A673 (cell line): ENCODE measurements at regions of chr16 and their contacts with region 1.

Region 1: DNA sequence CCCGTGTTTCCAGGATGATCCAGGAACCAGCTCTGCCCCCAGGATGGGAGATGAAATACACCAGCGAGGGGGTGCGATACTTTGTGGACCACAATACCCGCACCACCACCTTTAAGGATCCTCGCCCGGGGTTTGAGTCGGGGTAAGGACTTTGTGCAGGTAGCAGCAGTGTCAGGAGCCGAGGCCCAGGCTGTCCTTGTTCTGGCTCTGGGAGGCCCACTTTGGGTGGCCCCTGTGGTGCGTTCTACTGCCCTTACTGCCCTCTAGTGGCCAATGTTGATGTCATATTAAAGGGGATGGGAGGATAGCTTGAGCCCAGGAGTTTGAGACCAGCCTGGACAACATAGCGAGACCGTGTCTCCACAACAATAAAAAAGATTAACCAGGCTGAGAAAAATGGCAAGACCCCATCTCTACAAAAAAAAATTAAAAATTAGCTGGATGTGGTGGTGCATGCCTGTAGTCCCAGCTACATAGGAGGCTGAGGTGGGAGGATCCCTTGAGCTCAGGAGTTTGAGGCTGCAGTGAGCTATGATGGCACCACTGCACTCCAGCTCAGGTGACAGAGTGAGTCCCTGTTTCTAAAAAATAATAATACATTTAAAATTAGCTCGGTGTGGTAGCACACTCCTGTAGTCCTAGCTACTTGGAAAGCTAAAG is 20.9 kb upstream of the CLEC18A start:
- DNase-seq: peak; percentile 78
- H3K4me3 ChIP-seq: no peak overlapping the region
- H3K27ac ChIP-seq: no peak overlapping the region
- H3K4me1 ChIP-seq: no peaks in the 10 kb centered on the region
- H3K27me3 ChIP-seq: no peaks in the 10 kb centered on the region
- CTCF ChIP-seq: peak; percentile 77

Region 2: DNA sequence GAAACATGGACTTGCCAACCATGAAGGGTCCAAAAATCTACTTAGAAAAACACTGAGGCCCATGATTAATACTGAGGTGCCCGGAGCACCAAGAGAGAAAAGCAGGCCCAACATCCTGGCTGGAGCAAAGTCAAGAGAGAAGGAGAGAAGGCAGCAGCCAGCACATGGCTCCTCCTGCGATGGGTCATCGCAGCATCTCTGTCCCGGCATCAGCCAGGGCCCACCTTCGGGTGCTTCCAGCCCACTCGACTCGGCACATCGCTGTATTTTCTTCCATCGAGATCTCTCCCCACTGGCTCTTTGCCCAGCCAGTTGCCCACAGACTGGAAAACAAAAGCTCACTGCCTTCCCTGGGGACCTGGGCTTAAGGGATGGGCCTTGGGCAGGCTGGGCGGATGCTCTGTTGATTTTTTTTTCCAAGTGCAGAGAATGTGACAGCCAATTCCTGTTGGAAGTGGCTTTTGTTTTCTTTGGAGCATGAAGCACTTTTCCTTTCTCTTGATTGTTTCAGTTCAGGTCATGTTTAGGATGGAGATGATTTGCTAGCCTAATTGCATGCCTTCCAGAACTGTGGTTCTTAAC is 447.7 kb before region 1 on chr16:
- CTCF ChIA-PET with region 1: no interaction called
- POLR2A ChIA-PET with region 1: no interaction called
- intact Hi-C with region 1: no loop called
- DNase-seq: peak; percentile 88
- H3K4me3 ChIP-seq: no peak overlapping the region
- H3K27ac ChIP-seq: no peak overlapping the region
- H3K4me1 ChIP-seq: peaks cover 12% of the 10 kb centered on the region
- H3K27me3 ChIP-seq: no peaks in the 10 kb centered on the region
- CTCF ChIP-seq: no peak

Region 3: DNA sequence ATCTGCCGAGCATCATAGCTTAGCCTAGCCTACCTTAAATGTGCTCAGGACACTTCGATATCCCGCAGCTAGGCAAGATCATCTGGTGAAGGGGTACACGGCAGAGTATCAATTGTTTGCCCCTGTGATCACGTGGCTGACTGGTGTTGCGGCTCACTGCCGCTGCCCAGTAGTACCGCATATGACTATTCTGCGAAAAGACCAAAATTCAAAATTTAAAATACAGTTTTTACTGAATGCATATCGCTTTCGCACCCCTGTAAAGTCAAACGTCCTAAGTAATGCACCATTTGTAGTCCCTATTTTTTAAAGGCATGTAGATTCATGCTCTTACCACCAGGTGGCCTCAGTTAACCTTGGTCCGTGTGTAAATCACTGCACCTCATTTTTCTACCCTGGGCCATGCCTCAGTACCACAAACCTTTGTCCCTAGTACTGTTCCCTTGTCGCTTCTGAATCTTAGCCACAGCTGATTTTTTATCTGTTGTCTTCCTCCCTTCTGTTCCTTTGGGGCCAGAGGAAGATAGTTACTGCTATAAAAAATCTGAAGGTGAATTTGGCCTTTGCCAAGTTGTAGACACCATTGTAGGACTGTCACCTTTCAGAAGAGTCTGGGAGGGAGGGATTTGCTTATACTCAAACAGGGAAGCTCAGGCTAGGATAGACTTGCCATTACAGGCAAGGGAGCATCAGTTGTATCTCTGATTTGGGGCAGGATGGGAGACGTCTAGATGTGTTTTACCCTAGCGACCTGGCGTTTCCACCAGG is 133.7 kb before region 1 on chr16:
- CTCF ChIA-PET with region 1: interaction called, 18 read pairs
- POLR2A ChIA-PET with region 1: no interaction called
- intact Hi-C with region 1: loop called (anchors 1 kb)
- DNase-seq: peak; percentile 85
- H3K4me3 ChIP-seq: peak overlapping the region; percentile 16
- H3K27ac ChIP-seq: no peak overlapping the region
- H3K4me1 ChIP-seq: no peaks in the 10 kb centered on the region
- H3K27me3 ChIP-seq: no peaks in the 10 kb centered on the region
- CTCF ChIP-seq: peak; percentile 89

Region 4: GRCh38 chr16:70018254-70018653 is 88.0 kb after region 1 on chr16:
- CTCF ChIA-PET with region 1: no interaction called
- POLR2A ChIA-PET with region 1: no interaction called
- intact Hi-C with region 1: no loop called
- DNase-seq: peak; percentile 41
- H3K4me3 ChIP-seq: no peak overlapping the region
- H3K27ac ChIP-seq: no peak overlapping the region
- H3K4me1 ChIP-seq: peaks cover 7% of the 10 kb centered on the region
- H3K27me3 ChIP-seq: no peaks in the 10 kb centered on the region
- CTCF ChIP-seq: peak; percentile 53